ENCODE measurements at regions of chr7 and their contacts with region 1.

Region 1: GRCh38 chr7:131107337-131108211 is 220.1 kb upstream of the MKLN1 start:
- DNase-seq: peak; percentile 88
- H3K4me3 ChIP-seq: peak overlapping the region; percentile 99 to 100
- H3K27ac ChIP-seq: peak overlapping the region; percentile 99 to 100
- H3K4me1 ChIP-seq: no peaks in the 10 kb centered on the region
- H3K27me3 ChIP-seq: no peaks in the 10 kb centered on the region
- CTCF ChIP-seq: peak in 2 of 4 experiments; percentile 12 to 13
- POLR2A ChIP-seq: peak; percentile 93

Region 2: DNA sequence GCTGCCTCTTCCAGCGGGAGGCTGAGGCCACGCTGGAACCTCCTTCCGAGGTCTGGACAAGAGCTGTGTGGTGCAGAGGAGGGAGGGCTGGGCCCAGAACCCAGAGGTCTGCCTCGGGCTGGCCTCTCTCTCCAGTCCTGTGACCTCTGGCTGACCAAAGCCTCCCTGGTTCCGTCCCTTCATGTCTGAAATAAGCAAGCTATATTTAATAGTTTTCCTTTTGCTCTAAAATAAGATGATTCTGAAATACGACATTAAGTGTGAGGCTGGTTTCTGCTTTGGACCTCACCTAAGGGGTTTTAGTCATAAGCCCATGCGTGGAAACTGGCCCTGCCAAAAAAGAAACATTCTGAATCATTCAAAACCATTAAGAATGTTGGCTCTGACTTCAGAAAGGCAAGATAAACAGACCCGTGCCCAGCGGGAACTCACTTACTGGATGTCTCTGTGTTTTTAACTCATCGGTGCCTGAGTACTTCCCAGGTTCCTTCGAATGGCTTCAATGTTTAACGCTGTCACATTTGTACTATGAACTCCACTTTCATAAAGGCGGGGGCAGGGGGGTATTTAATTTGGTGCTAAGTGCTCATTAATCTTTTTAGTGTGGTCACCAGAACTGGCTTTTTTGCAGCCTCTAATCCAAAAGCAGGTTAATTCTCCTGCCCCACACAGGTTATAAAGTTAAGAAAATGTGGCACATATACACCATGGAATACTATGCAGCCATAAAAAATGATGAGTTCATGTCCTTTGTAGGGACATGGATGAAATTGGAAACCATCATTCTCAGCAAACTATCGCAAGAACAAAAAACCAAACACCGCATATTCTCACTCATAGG is 216.1 kb before region 1 on chr7:
- intact Hi-C with region 1: loop called (anchors 2 kb)
- DNase-seq: peak; percentile 55
- H3K4me3 ChIP-seq: no peak overlapping the region
- H3K27ac ChIP-seq: peak overlapping the region; percentile 73 to 86
- H3K4me1 ChIP-seq: no peaks in the 10 kb centered on the region
- H3K27me3 ChIP-seq: no peaks in the 10 kb centered on the region
- CTCF ChIP-seq: no peak
- POLR2A ChIP-seq: no peak

Region 3: GRCh38 chr7:131151034-131151433 is 43.5 kb after region 1 on chr7:
- intact Hi-C with region 1: loop called (anchors 5 kb)
- DNase-seq: no peak
- H3K4me3 ChIP-seq: no peak overlapping the region
- H3K27ac ChIP-seq: no peak overlapping the region
- H3K4me1 ChIP-seq: no peaks in the 10 kb centered on the region
- H3K27me3 ChIP-seq: no peaks in the 10 kb centered on the region
- CTCF ChIP-seq: no peak
- POLR2A ChIP-seq: no peak

Region 4: GRCh38 chr7:131284702-131285419 is 177.3 kb after region 1 on chr7:
- intact Hi-C with region 1: loop called (anchors 5 kb)
- DNase-seq: peak; percentile 94
- H3K4me3 ChIP-seq: no peak overlapping the region
- H3K27ac ChIP-seq: peak overlapping the region; percentile 93 to 94
- H3K4me1 ChIP-seq: peaks cover 21% of the 10 kb centered on the region
- H3K27me3 ChIP-seq: no peaks in the 10 kb centered on the region
- CTCF ChIP-seq: peak in 2 of 4 experiments; percentile 8 to 13
- POLR2A ChIP-seq: peak; percentile 17

Region 5: GRCh38 chr7:131424219-131424822 is 316.7 kb after region 1 on chr7:
- intact Hi-C with region 1: loop called (anchors 5 kb)
- DNase-seq: no peak
- H3K4me3 ChIP-seq: no peak overlapping the region
- H3K27ac ChIP-seq: peak overlapping the region; percentile 29 to 45
- H3K4me1 ChIP-seq: no peaks in the 10 kb centered on the region
- H3K27me3 ChIP-seq: no peaks in the 10 kb centered on the region
- CTCF ChIP-seq: peak in 3 of 4 experiments; percentile 46 to 79 (median 69)
- POLR2A ChIP-seq: no peak

Measured in prostate gland (tissue), 2 donors.